Activated B cell treated with CpG ODN at 0.5 μM for 24 hours (primary cell): ENCODE measurements at regions of chr5 and their contacts with region 1.

Region 1: GRCh38 chr5:1536322-1536845 is 12.6 kb upstream of the LPCAT1 start:
- DNase-seq: peak; percentile 54
- ATAC-seq: peak; percentile 97
- H3K4me3 Mint-ChIP-seq: peak overlapping the region; percentile 63
- H3K27ac Mint-ChIP-seq: peak overlapping the region; percentile 93
- H3K4me1 Mint-ChIP-seq: peaks cover 36% of the 10 kb centered on the region
- H3K27me3 Mint-ChIP-seq: no peaks in the 10 kb centered on the region
- CTCF ChIP-seq: no peak

Region 2: GRCh38 chr5:1385395-1386273 is 150.8 kb before region 1 on chr5:
- CTCF ChIA-PET with region 1: no interaction called
- POLR2A ChIA-PET with region 1: interaction called, 11 read pairs
- intact Hi-C with region 1: loop called (anchors 1 kb)
- DNase-seq: peak; percentile 85
- ATAC-seq: peak; percentile 94
- H3K4me3 Mint-ChIP-seq: peak overlapping the region; percentile 96
- H3K27ac Mint-ChIP-seq: peak overlapping the region; percentile 92
- H3K4me1 Mint-ChIP-seq: peaks cover 27% of the 10 kb centered on the region
- H3K27me3 Mint-ChIP-seq: peaks cover 2% of the 10 kb centered on the region
- CTCF ChIP-seq: no peak

Region 3: GRCh38 chr5:1488943-1489680 is 47.3 kb before region 1 on chr5:
- CTCF ChIA-PET with region 1: no interaction called
- POLR2A ChIA-PET with region 1: interaction called, 65 read pairs
- intact Hi-C with region 1: loop called (anchors 1 kb)
- DNase-seq: peak; percentile 62
- ATAC-seq: peak; percentile 51
- H3K4me3 Mint-ChIP-seq: peak overlapping the region; percentile 78
- H3K27ac Mint-ChIP-seq: peak overlapping the region; percentile 83
- H3K4me1 Mint-ChIP-seq: peaks cover 100% of the 10 kb centered on the region
- H3K27me3 Mint-ChIP-seq: no peaks in the 10 kb centered on the region
- CTCF ChIP-seq: no peak

Region 4: GRCh38 chr5:1503241-1504068 is 32.9 kb before region 1 on chr5:
- CTCF ChIA-PET with region 1: no interaction called
- POLR2A ChIA-PET with region 1: interaction called, 41 read pairs
- intact Hi-C with region 1: loop called (anchors 1 kb)
- DNase-seq: peak; percentile 43
- ATAC-seq: peak; percentile 38
- H3K4me3 Mint-ChIP-seq: peak overlapping the region; percentile 80
- H3K27ac Mint-ChIP-seq: peak overlapping the region; percentile 99
- H3K4me1 Mint-ChIP-seq: peaks cover 93% of the 10 kb centered on the region
- H3K27me3 Mint-ChIP-seq: no peaks in the 10 kb centered on the region
- CTCF ChIP-seq: no peak

Region 5: DNA sequence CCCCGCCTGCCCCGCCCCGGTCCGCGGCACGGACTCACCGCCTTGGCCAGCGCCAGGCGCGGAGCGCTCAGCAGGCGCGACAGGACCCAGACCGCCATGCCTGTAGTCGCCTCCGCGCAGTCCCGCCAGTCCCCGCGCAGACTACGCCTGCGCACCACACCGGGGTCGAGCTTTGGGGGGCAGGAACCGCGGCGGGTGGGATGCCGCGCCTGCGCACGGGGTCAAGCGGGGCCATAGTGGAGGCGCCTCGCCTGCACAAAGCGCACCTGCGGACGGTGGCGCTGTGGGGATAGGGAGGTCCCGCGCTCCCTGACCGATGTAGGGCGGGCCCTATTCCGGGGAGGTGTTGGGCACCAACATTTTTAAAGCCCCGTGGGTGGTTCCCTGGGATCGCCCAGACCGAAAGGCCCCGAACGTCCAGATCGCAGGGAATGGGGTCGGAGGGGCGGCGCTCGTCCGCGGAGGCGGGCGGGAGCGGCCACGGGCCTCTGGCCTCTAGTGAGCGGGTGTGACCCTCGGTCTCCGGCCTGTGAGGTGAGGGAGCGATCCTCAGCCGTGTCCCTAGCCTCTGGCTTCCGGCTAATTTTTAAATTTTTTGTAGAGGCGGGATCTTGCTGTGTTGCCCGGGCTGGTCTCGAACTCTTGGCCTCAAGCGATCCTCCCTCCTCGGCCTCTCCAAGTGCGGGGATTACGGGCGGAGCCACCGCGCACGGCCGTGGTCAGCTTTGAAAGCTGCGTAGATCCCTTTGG is 58.1 kb after region 1 on chr5:
- CTCF ChIA-PET with region 1: interaction called, 3 read pairs
- POLR2A ChIA-PET with region 1: interaction called, 3 read pairs
- intact Hi-C with region 1: loop called (anchors 2 kb)
- DNase-seq: peak; percentile 81
- ATAC-seq: peak; percentile 94
- H3K4me3 Mint-ChIP-seq: peak overlapping the region; percentile 82
- H3K27ac Mint-ChIP-seq: peak overlapping the region; percentile 56
- H3K4me1 Mint-ChIP-seq: peaks cover 19% of the 10 kb centered on the region
- H3K27me3 Mint-ChIP-seq: no peaks in the 10 kb centered on the region
- CTCF ChIP-seq: no peak